ENCODE measurements at regions of chr12 and their contacts with region 1.

Region 1: DNA sequence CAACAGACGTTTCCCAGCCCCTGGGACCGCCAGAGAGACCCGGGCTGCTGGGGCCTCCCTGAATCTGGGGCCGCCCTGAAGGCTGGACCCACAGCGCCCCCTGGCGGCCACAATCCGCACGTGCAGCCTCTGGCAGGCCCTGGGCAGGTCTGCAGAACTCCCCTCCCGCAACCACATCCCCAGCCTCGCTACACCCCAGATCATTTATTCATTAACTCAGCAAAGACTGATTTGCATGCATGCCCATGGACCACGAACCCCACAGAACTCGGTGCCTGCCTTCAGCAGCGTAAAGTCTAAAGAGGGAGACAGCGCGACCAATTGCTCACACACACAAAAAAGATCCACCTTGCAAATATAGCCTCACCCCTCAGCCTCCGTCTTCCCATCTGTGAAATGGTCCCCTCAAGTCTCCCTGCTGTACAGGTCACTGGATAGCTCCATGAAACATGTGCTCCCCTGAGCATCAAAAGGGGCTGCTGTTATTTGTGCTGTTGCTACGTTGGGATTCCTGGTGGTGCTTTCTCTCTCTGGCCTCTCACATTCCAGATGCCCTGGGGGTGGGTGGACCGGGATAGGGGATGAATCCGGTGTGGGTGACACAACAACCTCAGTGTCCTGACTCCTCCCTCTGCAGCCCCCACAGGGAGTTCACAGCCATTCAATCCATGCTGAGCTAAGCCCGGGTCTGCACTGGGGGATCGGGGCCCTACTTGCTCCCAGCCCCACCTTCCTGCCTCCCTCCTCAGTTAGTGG is 96.4 kb downstream of the SCARB1 start:
- DNase-seq: peak; percentile 80 to 87
- ATAC-seq: peak; percentile 68 to 89 (median 83)
- H3K4me3 ChIP-seq: no peak overlapping the region
- H3K27ac ChIP-seq: peak overlapping the region in 7 of 10 donors; percentile 66 to 87 (median 81)
- H3K4me1 ChIP-seq: peaks cover 6 to 55% (median 38%) of the 10 kb centered on the region in 9 donors
- H3K27me3 ChIP-seq: peaks cover 0 to 4% (median 0%) of the 10 kb centered on the region in 7 donors
- CTCF ChIP-seq: peak; percentile 98 to 100 (median 100)

Region 2: DNA sequence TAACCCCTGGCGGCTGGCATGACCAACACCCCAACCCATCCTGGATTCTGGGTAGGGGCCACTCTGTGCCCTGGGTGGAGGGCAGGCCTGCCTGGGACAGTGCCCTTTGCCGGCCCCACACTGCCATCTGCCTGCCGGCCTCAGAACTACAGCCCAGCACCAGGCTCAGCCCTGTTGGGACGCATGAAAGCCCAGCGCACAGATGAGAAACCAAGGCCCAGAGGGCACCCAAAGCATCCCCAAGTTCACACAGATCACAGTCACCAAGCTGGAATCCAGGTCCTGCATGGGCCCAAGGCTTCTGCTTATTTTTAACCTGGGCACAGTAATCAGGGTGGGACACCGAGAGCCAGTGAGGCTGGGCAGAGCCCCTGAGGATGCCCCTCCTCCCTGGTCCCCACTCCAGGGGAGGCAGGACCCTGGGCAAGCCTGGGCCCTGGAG is 446.2 kb before region 1 on chr12:
- intact Hi-C with region 1: loop called in 6 of 10 experiments (anchors 5 to 10 kb)
- DNase-seq: peak; percentile 57 to 79
- ATAC-seq: peak; percentile 70 to 88 (median 82)
- H3K4me3 ChIP-seq: no peak overlapping the region
- H3K27ac ChIP-seq: no peak overlapping the region
- H3K4me1 ChIP-seq: peaks cover 0 to 7% (median 0%) of the 10 kb centered on the region in 9 donors
- H3K27me3 ChIP-seq: no peaks in the 10 kb centered on the region
- CTCF ChIP-seq: peak; percentile 79 to 97 (median 93)

Region 3: GRCh38 chr12:124369055-124369900 is 398.0 kb before region 1 on chr12:
- intact Hi-C with region 1: loop called in 2 of 10 experiments (anchors 5 to 10 kb)
- DNase-seq: peak; percentile 91 to 94
- ATAC-seq: peak; percentile 83 to 93 (median 88)
- H3K4me3 ChIP-seq: peak overlapping the region in 2 of 10 donors; percentile 4 to 18
- H3K27ac ChIP-seq: peak overlapping the region; percentile 81 to 96 (median 91)
- H3K4me1 ChIP-seq: peaks cover 45 to 83% (median 66%) of the 10 kb centered on the region in 9 donors
- H3K27me3 ChIP-seq: no peaks in the 10 kb centered on the region
- CTCF ChIP-seq: peak; percentile 17 to 69 (median 51)

Region 4: GRCh38 chr12:124512667-124513296 is 254.5 kb before region 1 on chr12:
- intact Hi-C with region 1: loop called in 4 of 10 experiments (anchors 5 to 10 kb)
- DNase-seq: peak; percentile 88 to 90
- ATAC-seq: peak in 7 of 8 donors; percentile 6 to 54 (median 18)
- H3K4me3 ChIP-seq: peak overlapping the region in 2 of 10 donors; percentile 6 to 9
- H3K27ac ChIP-seq: peak overlapping the region; percentile 36 to 83 (median 74)
- H3K4me1 ChIP-seq: peaks cover 52 to 100% (median 92%) of the 10 kb centered on the region in 9 donors
- H3K27me3 ChIP-seq: no peaks in the 10 kb centered on the region
- CTCF ChIP-seq: no peak

Region 5: GRCh38 chr12:124655698-124656516 is 111.3 kb before region 1 on chr12:
- intact Hi-C with region 1: loop called in 2 of 10 experiments (anchors 10 kb)
- DNase-seq: peak; percentile 80 to 87
- ATAC-seq: peak; percentile 77 to 84 (median 83)
- H3K4me3 ChIP-seq: peak overlapping the region in 7 of 10 donors; percentile 13 to 38 (median 30)
- H3K27ac ChIP-seq: peak overlapping the region; percentile 68 to 96 (median 86)
- H3K4me1 ChIP-seq: peaks cover 24 to 61% (median 56%) of the 10 kb centered on the region in 9 donors
- H3K27me3 ChIP-seq: no peaks in the 10 kb centered on the region
- CTCF ChIP-seq: peak in 1 of 9 donors; percentile 14

Region 6: GRCh38 chr12:124917135-124917840 is 150.0 kb after region 1 on chr12:
- intact Hi-C with region 1: no loop called
- DNase-seq: peak; percentile 96 to 98
- ATAC-seq: peak; percentile 91 to 94 (median 92)
- H3K4me3 ChIP-seq: peak overlapping the region in 9 of 10 donors; percentile 10 to 92 (median 88)
- H3K27ac ChIP-seq: peak overlapping the region; percentile 96 to 100 (median 100)
- H3K4me1 ChIP-seq: peaks cover 8 to 78% (median 58%) of the 10 kb centered on the region in 9 donors
- H3K27me3 ChIP-seq: no peaks in the 10 kb centered on the region
- CTCF ChIP-seq: no peak

Measured in heart right ventricle (tissue), 16 donors.